H1 (cell line): ENCODE measurements at regions of chr19 and their contacts with region 1.

Region 1: GRCh38 chr19:8494158-8494557 is 8.3 kb downstream of the PRAM1 start:
- DNase-seq: no peak
- H3K4me3 ChIP-seq: no peak overlapping the region
- H3K27ac ChIP-seq: no peak overlapping the region
- H3K4me1 ChIP-seq: peaks cover 0 to 2% (median under 1%) of the 10 kb centered on the region in 4 experiments; a peak in 2 of 7 replicates
- H3K27me3 ChIP-seq: no peaks in the 10 kb centered on the region
- CTCF ChIP-seq: no peak
- EP300 ChIP-seq: no peak
- POLR2A ChIP-seq: no peak
- RAD21 ChIP-seq: no peak

Region 2: GRCh38 chr19:8505680-8506401 is 11.7 kb after region 1 on chr19:
- CTCF ChIA-PET with region 1: interaction called, 8 read pairs
- POLR2A ChIA-PET with region 1: interaction called, 14 read pairs
- DNase-seq: peak; percentile 49 to 94
- H3K4me3 ChIP-seq: peak overlapping the region; percentile 32 to 70 (median 62)
- H3K27ac ChIP-seq: no peak overlapping the region
- H3K4me1 ChIP-seq: peaks cover 0 to 6% (median 5%) of the 10 kb centered on the region in 4 experiments; a peak in 5 of 7 replicates
- H3K27me3 ChIP-seq: no peaks in the 10 kb centered on the region
- CTCF ChIP-seq: peak; percentile 54 to 62 (median 56)
- EP300 ChIP-seq: no peak
- POLR2A ChIP-seq: peak in 1 of 2 experiments; percentile 70; a peak in 1 of 3 replicates
- RAD21 ChIP-seq: peak; percentile 29 to 58; a peak in 3 of 4 replicates